ENCODE measurements at regions of chr13 and their contacts with region 1.

Region 1: GRCh38 chr13:101757446-101758039 is 305.1 kb downstream of the ITGBL1 start:
- DNase-seq: peak; percentile 48
- H3K4me3 ChIP-seq: no peak overlapping the region; a peak in 1 of 4 replicates
- H3K27ac ChIP-seq: no peak overlapping the region
- H3K4me1 ChIP-seq: peaks cover 0 to 13% of the 10 kb centered on the region in 2 experiments; a peak in 2 of 4 replicates
- H3K27me3 ChIP-seq: no peaks in the 10 kb centered on the region
- CTCF ChIP-seq: peak; percentile 76
- EP300 ChIP-seq: no peak
- RAD21 ChIP-seq: peak; percentile 84

Region 2: DNA sequence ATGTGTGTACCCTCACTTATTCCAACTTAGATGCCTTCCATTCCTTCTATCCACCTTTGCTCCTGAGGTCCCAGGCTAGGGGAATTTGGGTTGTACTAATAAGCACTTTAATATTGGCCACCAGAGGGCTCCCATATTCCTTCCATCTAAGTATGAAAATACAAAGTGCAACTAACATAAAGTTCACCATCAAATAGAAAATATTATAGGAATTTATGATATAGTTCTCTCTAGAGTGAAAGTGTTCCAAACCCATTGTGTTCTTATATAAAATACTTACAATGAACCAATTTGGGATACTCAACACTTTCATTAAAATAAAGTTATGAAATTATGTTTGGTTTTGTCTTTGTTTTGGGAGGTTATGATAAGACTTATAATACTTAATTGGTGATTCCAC is 242.8 kb before region 1 on chr13:
- CTCF ChIA-PET with region 1: interaction called, 24 read pairs
- POLR2A ChIA-PET with region 1: no interaction called
- DNase-seq: peak; percentile 17
- H3K4me3 ChIP-seq: no peak overlapping the region
- H3K27ac ChIP-seq: peak overlapping the region; percentile 73 to 94; a peak in 3 of 4 replicates
- H3K4me1 ChIP-seq: peaks cover 18 to 36% of the 10 kb centered on the region in 2 experiments; a peak in 3 of 4 replicates
- H3K27me3 ChIP-seq: no peaks in the 10 kb centered on the region
- CTCF ChIP-seq: peak; percentile 84
- EP300 ChIP-seq: no peak
- RAD21 ChIP-seq: peak; percentile 81

Region 3: DNA sequence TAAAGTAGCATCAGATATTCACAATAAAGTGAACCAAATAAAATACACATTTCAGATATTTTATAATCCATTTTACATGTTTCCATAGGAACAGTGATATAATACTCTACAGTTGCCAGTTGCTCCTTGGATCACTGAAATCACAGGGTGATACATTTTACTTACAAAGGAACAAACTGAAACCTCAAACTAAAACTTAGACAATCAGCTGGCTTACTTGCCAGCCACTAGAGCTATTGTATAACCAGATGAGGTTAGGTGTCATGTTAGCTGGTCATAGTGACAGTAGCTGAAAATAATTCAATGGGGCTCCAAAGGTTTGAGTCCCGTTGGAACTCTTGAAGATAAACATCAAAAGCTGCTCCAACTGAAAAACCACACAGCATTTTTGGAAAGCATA is 30.4 kb before region 1 on chr13:
- CTCF ChIA-PET with region 1: interaction called, 10 read pairs
- POLR2A ChIA-PET with region 1: no interaction called
- DNase-seq: no peak
- H3K4me3 ChIP-seq: no peak overlapping the region
- H3K27ac ChIP-seq: no peak overlapping the region
- H3K4me1 ChIP-seq: peaks cover 0 to 4% of the 10 kb centered on the region in 2 experiments
- H3K27me3 ChIP-seq: no peaks in the 10 kb centered on the region
- CTCF ChIP-seq: no peak
- EP300 ChIP-seq: no peak
- RAD21 ChIP-seq: no peak

Measured in SK-N-SH (cell line).